Sigmoid colon (tissue), 7 donors: ENCODE measurements at regions of chr3 and their contacts with region 1.

Region 1: GRCh38 chr3:168047190-168047795 is 48.4 kb downstream of the GOLIM4 start:
- DNase-seq: no peak
- H3K4me3 ChIP-seq: no peak overlapping the region
- H3K27ac ChIP-seq: no peak overlapping the region
- H3K4me1 ChIP-seq: peaks cover 0 to 32% (median 27%) of the 10 kb centered on the region in 4 donors
- H3K27me3 ChIP-seq: no peaks in the 10 kb centered on the region
- CTCF ChIP-seq: peak; percentile 72 to 89 (median 75)
- EP300 ChIP-seq: no peak
- POLR2A ChIP-seq: no peak

Region 2: DNA sequence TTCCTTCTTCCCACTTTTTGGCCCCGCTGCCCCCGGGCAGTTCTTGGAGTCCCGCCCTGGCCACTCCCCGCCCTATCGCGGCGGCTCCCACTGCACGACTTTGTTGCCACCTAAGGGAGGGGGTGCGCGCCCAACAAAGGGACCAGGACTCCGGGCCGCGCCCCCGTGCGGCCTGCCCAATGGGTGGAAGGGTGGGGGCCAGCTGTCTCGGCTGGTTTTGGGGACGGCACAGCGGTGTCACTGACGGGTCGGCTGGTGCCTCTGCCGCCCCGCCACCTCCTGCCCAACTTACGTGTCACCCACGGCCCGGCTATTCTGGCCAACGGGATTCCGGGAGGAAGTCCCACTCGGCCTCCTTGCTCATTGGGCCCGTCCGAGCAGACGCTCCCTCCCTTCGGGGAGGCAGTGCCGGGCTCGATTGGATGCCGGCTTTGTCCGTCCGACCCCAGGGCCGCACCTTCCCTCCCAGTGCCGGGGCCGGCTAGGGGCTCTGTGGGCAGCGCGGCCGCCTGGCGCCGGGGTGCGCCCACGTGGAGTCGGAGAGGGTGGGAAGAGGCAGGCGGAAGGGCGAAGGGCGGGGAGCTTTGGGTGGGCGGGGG is 48.4 kb after region 1 on chr3 and contains the start of gene GOLIM4:
- intact Hi-C with region 1: loop called (anchors 1 kb)
- DNase-seq: peak; percentile 97
- H3K4me3 ChIP-seq: peak within 1 kb of the TSS; percentile 73 to 96 (median 80)
- H3K27ac ChIP-seq: peak within 1 kb of the TSS; percentile 88 to 98 (median 96)
- H3K4me1 ChIP-seq: peaks cover 0 to 43% (median 36%) of the 10 kb centered on the region in 4 donors
- H3K27me3 ChIP-seq: no peaks in the 10 kb centered on the region
- CTCF ChIP-seq: no peak
- EP300 ChIP-seq: no peak
- POLR2A ChIP-seq: peak; percentile 55 to 81
- total RNA-seq, gene GOLIM4: 27.1 to 33.2 (median 27.3) TPM

Region 3: GRCh38 chr3:168894214-168894613 is 846.9 kb after region 1 on chr3:
- intact Hi-C with region 1: no loop called
- DNase-seq: no peak
- H3K4me3 ChIP-seq: no peak overlapping the region
- H3K27ac ChIP-seq: no peak overlapping the region
- H3K4me1 ChIP-seq: no peaks in the 10 kb centered on the region
- H3K27me3 ChIP-seq: no peaks in the 10 kb centered on the region
- CTCF ChIP-seq: no peak
- EP300 ChIP-seq: no peak
- POLR2A ChIP-seq: no peak